Right ventricle myocardium inferior (tissue), 1 donor: ENCODE measurements at regions of chr2 and their contacts with region 1.

Region 1: DNA sequence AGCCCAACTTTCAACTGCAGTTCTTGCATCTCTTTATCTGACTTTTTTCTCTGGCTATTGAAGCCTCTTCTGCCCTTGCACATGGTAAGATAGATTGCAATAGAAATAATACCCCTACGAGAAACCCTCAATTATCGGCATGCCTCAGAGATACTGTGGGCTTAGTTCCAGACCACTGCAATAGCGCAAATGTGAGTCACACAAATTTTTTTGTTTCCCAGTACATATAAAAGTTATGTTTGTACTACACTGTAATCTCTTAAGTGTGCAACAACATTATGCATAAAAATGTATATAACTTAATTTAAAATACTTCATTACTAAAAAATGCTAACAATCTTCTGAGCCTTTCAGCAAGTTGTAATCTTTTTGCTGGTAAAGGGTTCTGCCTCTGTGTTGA is 124.7 kb downstream of the PDE1A start:
- DNase-seq: no peak
- ATAC-seq: no peak

Region 2: DNA sequence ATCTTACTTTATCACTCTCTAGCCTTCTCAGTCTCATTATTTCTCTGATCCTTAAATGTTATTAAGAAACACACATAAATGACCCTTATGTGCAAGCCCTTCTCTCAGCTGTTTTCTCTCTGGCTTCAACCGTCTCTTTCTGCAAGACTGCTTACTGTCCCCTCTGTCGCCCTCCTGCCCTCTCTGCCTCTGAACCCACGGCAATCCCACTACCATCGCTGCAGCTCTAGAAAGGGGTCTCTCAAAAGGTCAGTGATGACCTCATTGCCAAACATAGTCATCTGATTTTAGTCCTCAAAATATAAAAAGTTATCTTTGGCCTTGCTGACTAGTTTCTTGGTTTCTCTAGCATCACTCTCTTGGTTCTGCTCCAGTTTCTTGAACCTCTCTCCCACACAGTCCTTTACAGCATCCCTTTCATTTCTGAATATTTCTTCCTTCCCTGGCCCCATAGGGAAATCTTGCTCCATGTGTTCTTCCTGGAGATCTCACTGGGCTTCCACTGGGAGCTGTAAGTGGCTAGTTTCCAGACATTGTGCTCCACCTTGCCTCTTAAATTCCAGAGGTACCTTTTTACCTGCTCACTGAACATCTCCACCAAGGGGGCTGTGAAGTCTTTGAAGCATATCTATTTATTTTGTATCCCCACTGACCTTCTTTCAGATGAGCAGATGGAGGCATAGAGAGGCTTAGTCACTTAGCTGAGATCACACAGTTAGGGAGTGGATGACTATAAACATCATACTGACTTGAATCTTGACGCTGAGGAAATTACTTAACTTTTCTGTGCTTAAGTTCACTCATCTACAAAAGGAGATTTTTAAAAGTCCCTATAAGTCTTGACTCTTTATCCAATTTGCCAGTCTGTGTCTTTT is 28.5 kb after region 1 on chr2:
- intact Hi-C with region 1: no loop called
- DNase-seq: no peak
- ATAC-seq: peak; percentile 93

Region 3: GRCh38 chr2:182616471-182617393 is 314.6 kb after region 1 on chr2:
- intact Hi-C with region 1: no loop called
- DNase-seq: no peak
- ATAC-seq: no peak

Region 4: DNA sequence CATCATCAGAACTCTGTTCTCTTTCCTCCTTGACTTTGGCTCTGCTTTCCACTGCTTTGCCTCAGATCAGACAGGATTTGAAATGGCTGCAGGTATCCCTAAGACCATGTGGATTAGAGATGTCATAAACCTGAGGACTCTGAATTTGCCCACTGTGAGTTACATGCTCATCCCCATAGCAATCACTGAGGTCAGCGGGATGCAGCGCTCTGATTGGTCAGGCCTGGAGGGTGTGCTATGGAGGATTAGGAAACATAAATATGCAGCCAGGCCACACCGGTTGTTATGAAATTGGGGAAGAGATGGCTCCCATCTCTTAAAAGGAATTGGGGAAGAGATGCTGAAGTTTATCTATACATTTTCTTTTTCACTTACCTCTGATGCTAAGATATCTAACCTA is 340.2 kb after region 1 on chr2:
- intact Hi-C with region 1: loop called (anchors 10 kb)
- DNase-seq: peak; percentile 74
- ATAC-seq: peak; percentile 44